Activated B cell treated with CpG ODN at 0.5 μM for 24 hours (primary cell): ENCODE measurements at regions of chr14 and their contacts with region 1.

Region 1: DNA sequence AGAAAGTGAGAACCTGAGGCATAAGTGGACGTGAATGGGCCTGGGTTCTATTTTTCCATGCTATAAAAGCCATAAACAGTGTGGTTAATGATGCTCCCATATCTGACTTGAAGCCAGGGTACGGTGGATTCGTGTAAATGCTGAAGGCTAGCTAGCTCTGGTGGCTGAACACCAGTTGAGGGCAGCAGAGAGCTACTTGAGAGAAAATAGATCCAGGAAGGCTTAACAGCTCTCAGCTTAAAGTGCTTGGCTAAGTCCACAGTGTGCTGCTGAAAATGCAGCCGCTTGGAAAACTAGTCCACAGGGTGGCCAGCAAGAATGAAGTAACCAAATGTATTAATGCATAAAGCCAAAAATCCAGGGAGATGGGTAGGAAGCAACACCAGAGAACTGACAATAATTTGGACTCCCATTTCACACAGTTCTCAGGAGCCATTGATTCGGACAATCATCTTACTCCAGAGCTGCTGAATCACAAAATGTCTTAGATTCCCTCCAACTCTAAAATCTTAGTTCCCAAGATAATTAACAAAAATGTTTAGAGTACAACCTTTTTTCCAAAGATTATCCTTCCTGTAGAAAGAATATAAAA is 15.0 kb upstream of the FOXG1 start:
- DNase-seq: no peak
- ATAC-seq: peak; percentile 45
- H3K4me3 Mint-ChIP-seq: no peak overlapping the region
- H3K27ac Mint-ChIP-seq: no peak overlapping the region
- H3K4me1 Mint-ChIP-seq: no peaks in the 10 kb centered on the region
- H3K27me3 Mint-ChIP-seq: peaks cover 33% of the 10 kb centered on the region
- CTCF ChIP-seq: no peak

Region 2: DNA sequence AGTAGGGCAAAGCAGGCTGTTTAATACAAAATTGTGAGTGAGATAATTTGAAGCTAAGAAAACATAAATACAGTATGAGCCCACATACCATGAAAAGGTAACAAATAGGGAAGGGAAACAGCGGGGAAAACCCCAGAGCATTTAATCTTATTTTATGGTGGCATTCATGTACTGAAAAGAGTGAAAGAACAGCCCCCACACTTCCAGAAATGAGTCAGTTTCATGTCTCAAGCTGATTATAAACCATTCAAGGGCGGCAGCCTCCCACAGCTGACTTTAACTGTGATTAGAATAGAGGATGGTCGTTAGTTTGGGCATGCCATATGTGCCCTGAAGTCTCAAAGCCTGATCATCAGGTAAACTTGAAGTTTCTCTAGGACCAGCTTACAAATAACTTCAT is 79.6 kb after region 1 on chr14:
- CTCF ChIA-PET with region 1: no interaction called
- POLR2A ChIA-PET with region 1: no interaction called
- intact Hi-C with region 1: no loop called
- DNase-seq: no peak
- ATAC-seq: peak; percentile 86
- H3K4me3 Mint-ChIP-seq: no peak overlapping the region
- H3K27ac Mint-ChIP-seq: no peak overlapping the region
- H3K4me1 Mint-ChIP-seq: peaks cover 10% of the 10 kb centered on the region
- H3K27me3 Mint-ChIP-seq: peaks cover 1% of the 10 kb centered on the region
- CTCF ChIP-seq: no peak

Region 3: GRCh38 chr14:29222671-29223268 is 471.2 kb after region 1 on chr14:
- CTCF ChIA-PET with region 1: no interaction called
- POLR2A ChIA-PET with region 1: no interaction called
- intact Hi-C with region 1: loop called (anchors 5 kb)
- DNase-seq: no peak
- ATAC-seq: no peak
- H3K4me3 Mint-ChIP-seq: no peak overlapping the region
- H3K27ac Mint-ChIP-seq: no peak overlapping the region
- H3K4me1 Mint-ChIP-seq: no peaks in the 10 kb centered on the region
- H3K27me3 Mint-ChIP-seq: no peaks in the 10 kb centered on the region
- CTCF ChIP-seq: no peak

Region 4: GRCh38 chr14:30005114-30005808 is 1253.7 kb after region 1 on chr14:
- CTCF ChIA-PET with region 1: no interaction called
- POLR2A ChIA-PET with region 1: no interaction called
- intact Hi-C with region 1: loop called (anchors 1 kb)
- DNase-seq: no peak
- ATAC-seq: peak; percentile 61
- H3K4me3 Mint-ChIP-seq: no peak overlapping the region
- H3K27ac Mint-ChIP-seq: no peak overlapping the region
- H3K4me1 Mint-ChIP-seq: no peaks in the 10 kb centered on the region
- H3K27me3 Mint-ChIP-seq: no peaks in the 10 kb centered on the region
- CTCF ChIP-seq: peak; percentile 46

Region 5: DNA sequence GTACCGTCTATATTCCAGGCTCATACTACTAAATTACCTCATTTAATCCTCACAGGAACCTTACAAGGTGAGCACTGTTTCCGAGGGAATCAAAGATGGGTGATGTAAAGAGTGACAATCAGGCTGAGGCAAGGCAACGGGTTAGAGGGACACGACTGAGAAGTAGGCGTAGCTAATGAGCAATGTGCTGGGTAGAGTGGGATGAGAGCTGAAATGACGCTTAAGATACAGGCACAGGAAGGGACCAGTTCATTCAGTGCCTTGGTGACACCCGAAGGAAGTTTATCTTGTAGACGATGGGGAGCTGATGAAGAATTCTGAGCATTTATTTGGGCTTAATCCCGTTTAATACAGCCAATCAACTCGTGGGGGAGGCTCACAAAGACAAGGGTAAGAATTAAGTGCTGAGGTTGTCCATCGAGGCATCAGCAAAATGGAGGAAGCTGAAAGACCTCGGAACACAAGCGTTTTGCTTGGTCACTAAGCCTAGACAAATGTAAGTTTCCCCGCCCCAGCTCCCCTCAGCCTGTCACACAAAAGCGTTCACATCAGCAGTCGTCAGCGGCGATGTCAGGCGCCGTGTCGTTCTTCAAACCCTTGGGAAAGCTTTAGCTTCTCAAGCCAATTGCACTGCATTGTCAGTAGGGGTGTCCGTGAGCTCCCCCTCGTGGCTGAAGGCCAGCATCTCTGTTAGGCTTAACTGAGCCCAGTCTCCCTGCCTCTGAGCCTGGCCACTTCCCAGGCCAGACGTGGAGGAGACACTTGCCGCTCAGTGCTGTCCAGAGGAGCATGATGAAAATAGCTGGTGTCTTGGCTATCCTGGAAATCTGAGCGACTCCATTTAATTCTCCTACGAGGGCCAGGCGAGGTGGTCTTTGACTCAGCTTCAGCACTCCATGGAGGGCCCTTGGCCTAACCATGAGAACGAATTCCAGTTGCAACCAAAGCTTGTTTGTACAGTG is 1518.9 kb after region 1 on chr14:
- CTCF ChIA-PET with region 1: interaction called, 6 read pairs
- POLR2A ChIA-PET with region 1: no interaction called
- intact Hi-C with region 1: loop called (anchors 1 kb)
- DNase-seq: peak; percentile 33
- ATAC-seq: peak; percentile 82
- H3K4me3 Mint-ChIP-seq: peak overlapping the region; percentile 24
- H3K27ac Mint-ChIP-seq: no peak overlapping the region
- H3K4me1 Mint-ChIP-seq: peaks cover 2% of the 10 kb centered on the region
- H3K27me3 Mint-ChIP-seq: peaks cover 6% of the 10 kb centered on the region
- CTCF ChIP-seq: no peak

Region 6: GRCh38 chr14:30443368-30444007 is 1691.9 kb after region 1 on chr14:
- CTCF ChIA-PET with region 1: no interaction called
- POLR2A ChIA-PET with region 1: no interaction called
- intact Hi-C with region 1: loop called (anchors 5 kb)
- DNase-seq: no peak
- ATAC-seq: no peak
- H3K4me3 Mint-ChIP-seq: no peak overlapping the region
- H3K27ac Mint-ChIP-seq: no peak overlapping the region
- H3K4me1 Mint-ChIP-seq: no peaks in the 10 kb centered on the region
- H3K27me3 Mint-ChIP-seq: peaks cover 3% of the 10 kb centered on the region
- CTCF ChIP-seq: no peak